ENCODE measurements at regions of chr9 and their contacts with region 1.

Region 1: DNA sequence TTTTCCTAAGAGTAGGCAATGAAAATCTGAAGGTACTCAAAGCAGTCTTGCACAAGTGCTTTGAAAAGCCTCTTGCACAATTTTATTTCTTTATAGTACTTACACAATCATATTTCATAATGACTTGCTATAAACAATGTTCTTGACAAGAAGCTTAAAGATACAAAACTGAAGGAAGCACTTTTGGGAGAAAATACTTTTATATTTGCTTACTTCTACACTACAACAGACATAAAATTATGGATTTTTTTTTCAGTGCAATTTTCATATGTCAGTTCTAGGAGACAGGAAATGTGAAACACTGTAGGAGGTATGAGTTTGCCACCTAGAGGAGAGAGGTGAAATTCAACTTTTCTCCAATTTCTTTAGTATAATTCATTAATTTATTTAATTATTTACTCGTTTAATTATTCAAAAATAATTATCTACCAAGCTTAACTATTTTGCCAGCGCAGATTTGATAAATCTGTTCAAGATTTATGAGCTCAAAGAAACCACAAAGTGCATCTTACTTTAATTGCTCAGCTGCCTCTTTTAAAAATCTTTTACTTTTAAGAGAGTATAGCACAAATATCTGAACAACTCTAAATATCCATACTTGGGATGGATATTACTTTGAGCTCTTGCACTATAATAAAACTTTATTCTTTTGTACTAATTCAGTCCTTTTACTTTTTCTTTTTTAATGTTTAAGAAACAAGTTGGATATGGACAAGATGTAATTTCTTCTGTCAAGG is 29.0 kb upstream of the CDKN2B start:
- DNase-seq: peak in 1 of 2 experiments; percentile 39
- H3K4me3 ChIP-seq: no peak overlapping the region
- H3K27ac ChIP-seq: 0 out of 2 replicates have a peak overlapping the region, but pooled peaks have one; percentile 24
- H3K4me1 ChIP-seq: peaks cover 57% of the 10 kb centered on the region
- H3K27me3 ChIP-seq: no peaks in the 10 kb centered on the region
- CTCF ChIP-seq: peak; percentile 51; the same call in 1 of the 2 replicates

Region 2: DNA sequence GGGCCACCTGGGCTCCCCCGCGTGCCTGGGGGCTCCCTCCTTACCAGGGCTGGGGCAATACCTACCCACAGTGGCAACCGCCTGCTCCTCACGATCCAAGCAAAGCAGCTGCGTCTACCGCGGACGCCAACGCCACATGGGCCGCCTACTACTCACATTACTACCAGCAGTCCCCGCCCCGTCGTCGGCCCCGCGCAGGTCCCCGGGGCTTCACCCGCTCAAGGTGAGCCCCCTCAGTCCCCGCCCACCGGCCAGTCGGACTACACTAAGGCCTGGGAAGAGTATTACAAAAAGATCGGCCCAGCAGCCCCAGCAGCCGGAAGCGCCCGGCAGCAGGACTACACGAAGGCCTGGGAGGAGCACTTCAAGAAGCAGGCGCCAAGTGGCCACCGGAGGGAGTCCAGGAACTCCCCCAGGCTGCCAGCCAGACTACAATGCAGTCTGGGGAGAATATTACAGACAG is 341.7 kb before region 1 on chr9:
- CTCF ChIA-PET with region 1: no interaction called
- POLR2A ChIA-PET with region 1: no interaction called
- intact Hi-C with region 1: no loop called
- DNase-seq: no peak
- H3K4me3 ChIP-seq: no peak overlapping the region
- H3K27ac ChIP-seq: no peak overlapping the region
- H3K4me1 ChIP-seq: no peaks in the 10 kb centered on the region
- H3K27me3 ChIP-seq: no peaks in the 10 kb centered on the region
- CTCF ChIP-seq: no peak

Region 3: DNA sequence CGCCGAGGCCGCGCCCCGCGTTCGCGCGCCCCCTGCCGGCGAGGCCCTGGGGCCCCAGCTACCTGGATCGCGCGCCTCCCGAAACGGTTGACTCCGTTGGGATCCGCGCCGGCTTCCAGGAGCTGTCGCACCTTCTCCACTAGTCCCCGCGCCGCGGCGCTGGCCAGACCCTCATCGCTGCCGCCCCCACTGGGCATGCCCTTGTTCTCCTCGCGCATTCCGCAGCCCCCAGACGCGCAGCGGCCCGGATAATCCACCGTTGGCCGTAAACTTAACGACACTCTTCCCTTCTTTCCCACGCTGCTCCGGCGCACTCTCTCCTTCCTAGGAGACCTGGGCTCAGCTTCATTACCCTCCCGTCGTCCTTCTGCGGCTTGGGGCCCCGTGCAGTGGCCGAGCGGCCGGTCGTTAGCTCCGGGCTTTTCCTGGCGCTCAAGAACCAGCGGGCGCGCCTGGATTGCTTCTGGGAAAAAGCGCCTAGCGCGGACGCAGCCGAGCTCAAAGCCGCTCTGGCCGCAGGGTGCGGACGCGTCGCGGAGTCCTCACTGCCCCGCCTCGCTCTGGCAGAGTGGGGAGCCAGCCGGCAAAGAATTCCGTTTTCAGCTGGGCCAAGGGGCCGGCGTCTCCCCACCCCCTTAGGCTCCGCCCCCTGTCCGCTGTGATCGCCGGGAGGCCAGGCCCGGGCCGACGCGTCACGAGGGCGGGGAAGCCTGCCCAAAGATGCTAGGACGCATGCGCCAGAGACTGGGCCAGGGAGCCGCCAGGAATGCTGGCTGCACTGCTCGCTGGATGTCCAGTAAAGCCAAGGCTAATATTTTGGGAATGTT is 29.2 kb before region 1 on chr9 and contains the start of gene CDKN2B:
- CTCF ChIA-PET with region 1: interaction called, 5 read pairs
- POLR2A ChIA-PET with region 1: interaction called, 6 read pairs
- intact Hi-C with region 1: loop called (anchors 2 kb)
- DNase-seq: peak; percentile 86 to 94
- H3K4me3 ChIP-seq: peak within 1 kb of the TSS; percentile 100
- H3K27ac ChIP-seq: peak within 1 kb of the TSS; percentile 92
- H3K4me1 ChIP-seq: peaks cover 29% of the 10 kb centered on the region
- H3K27me3 ChIP-seq: no peaks in the 10 kb centered on the region
- CTCF ChIP-seq: peak; percentile 82
- total RNA-seq, gene CDKN2B: 33.8 and 40.2 TPM in 2 replicates

Region 4: GRCh38 chr9:22026696-22027095 is 11.4 kb before region 1 on chr9:
- CTCF ChIA-PET with region 1: no interaction called
- POLR2A ChIA-PET with region 1: no interaction called
- intact Hi-C with region 1: no loop called
- DNase-seq: no peak
- H3K4me3 ChIP-seq: no peak overlapping the region
- H3K27ac ChIP-seq: no peak overlapping the region
- H3K4me1 ChIP-seq: peaks cover 15% of the 10 kb centered on the region
- H3K27me3 ChIP-seq: no peaks in the 10 kb centered on the region
- CTCF ChIP-seq: no peak

Region 5: GRCh38 chr9:22103650-22104575 is 65.8 kb after region 1 on chr9:
- CTCF ChIA-PET with region 1: no interaction called
- POLR2A ChIA-PET with region 1: interaction called, 6 read pairs
- intact Hi-C with region 1: loop called (anchors 5 kb)
- DNase-seq: peak in 1 of 2 experiments; percentile 51
- H3K4me3 ChIP-seq: peak overlapping the region; percentile 18; the same call in 1 of the 2 replicates
- H3K27ac ChIP-seq: peak overlapping the region; percentile 94
- H3K4me1 ChIP-seq: peaks cover 53% of the 10 kb centered on the region
- H3K27me3 ChIP-seq: no peaks in the 10 kb centered on the region
- CTCF ChIP-seq: no peak

Region 6: GRCh38 chr9:22131817-22132216 is 93.7 kb after region 1 on chr9:
- CTCF ChIA-PET with region 1: interaction called, 15 read pairs
- POLR2A ChIA-PET with region 1: no interaction called
- intact Hi-C with region 1: no loop called
- DNase-seq: no peak
- H3K4me3 ChIP-seq: no peak overlapping the region
- H3K27ac ChIP-seq: no peak overlapping the region
- H3K4me1 ChIP-seq: no peaks in the 10 kb centered on the region; the same call in 1 of the 2 replicates
- H3K27me3 ChIP-seq: no peaks in the 10 kb centered on the region
- CTCF ChIP-seq: no peak

Measured in PC-9 (cell line).